Dorsolateral prefrontal cortex (tissue), 120 donors: ENCODE measurements at regions of chr2 and their contacts with region 1.

Region 1: DNA sequence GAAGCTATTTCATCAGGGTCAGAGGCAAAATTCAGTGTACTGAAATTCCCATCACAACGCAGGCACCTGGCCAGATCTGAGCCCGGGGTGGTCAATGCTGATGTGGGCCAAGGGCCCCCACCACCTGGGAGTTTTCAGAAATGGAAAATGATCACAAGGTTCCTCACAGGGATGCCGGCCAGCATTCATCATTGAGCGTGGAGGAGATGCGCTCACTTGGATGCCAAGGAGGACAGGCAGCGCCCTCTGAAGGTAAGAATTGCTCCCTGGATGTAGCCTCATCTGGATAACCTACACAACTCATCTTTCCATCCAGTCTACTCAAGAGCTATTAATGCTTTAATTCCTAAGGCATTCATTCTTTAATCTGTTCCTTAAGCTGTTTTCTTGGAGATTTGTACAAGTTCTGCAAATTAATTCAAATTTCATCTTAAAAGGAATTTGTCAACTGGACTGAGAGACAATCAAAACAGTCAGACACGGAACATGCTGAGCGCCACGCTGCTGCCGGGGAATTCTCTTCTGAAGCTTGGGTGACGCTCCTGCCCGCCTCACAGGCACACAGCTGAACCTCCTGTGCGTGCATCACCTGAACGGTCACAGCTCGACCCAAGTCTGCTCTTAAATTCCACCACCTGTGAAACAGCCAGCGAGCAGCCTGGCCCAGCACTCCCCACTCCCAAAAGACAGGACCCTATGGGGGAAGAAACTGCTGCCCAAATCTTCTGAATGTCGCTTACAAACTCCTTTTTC is 206.7 kb downstream of the HDAC4 start:
- DNase-seq: peak in 9 of 10 donors; percentile 28 to 87 (median 76)
- H3K4me3 ChIP-seq: peak overlapping the region in 44 of 59 donors; percentile 2 to 63 (median 44)
- H3K27ac ChIP-seq: peak overlapping the region; percentile 55 to 98 (median 91)
- H3K27me3 ChIP-seq: no peaks in the 10 kb centered on the region
- CTCF ChIP-seq: peak in 55 of 56 donors; percentile 25 to 78 (median 65)

Region 2: DNA sequence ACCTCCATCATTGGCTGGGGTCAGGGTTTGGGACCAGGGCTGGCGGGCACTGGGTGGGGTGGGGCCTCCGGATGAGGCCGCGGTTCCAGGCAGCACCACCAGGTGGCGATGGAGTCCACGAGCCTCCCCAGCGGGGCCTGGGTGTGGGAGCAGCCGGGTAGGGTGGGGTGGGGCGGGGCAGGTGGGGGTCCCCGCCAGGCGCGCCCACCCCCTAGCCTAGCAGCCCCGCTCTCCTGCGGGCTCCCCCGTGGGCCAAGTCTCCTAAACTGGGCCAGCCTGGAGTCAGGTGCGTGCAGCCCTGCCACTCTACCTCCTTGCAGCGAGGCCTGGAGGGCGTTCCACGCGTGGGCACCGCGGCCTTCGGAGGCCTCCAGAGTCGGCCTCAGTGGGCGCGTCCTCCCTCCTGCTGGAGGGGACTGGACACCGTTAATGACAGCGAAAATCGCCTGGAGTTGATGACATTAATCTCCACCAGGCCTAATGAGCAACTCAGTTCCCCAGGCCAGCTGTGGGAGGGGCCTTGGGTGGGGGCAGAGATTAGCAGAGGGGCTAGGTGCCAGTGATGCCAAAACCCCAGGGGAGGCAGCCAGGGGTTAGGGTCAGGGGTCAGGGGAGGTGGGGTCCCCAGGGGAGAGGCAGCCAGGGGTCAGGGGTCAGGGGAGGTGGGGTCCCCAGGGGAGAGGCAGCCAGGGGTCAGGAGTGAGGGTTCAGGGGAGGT is 158.6 kb before region 1 on chr2:
- intact Hi-C with region 1: loop called (anchors 5 to 10 kb)
- DNase-seq: peak; percentile 47 to 82 (median 64)
- H3K4me3 ChIP-seq: peak overlapping the region in 2 of 59 donors; percentile 18
- H3K27ac ChIP-seq: peak overlapping the region in 3 of 59 donors; percentile 44 to 57 (median 46)
- H3K27me3 ChIP-seq: no peaks in the 10 kb centered on the region
- CTCF ChIP-seq: peak; percentile 61 to 99 (median 93)

Region 3: DNA sequence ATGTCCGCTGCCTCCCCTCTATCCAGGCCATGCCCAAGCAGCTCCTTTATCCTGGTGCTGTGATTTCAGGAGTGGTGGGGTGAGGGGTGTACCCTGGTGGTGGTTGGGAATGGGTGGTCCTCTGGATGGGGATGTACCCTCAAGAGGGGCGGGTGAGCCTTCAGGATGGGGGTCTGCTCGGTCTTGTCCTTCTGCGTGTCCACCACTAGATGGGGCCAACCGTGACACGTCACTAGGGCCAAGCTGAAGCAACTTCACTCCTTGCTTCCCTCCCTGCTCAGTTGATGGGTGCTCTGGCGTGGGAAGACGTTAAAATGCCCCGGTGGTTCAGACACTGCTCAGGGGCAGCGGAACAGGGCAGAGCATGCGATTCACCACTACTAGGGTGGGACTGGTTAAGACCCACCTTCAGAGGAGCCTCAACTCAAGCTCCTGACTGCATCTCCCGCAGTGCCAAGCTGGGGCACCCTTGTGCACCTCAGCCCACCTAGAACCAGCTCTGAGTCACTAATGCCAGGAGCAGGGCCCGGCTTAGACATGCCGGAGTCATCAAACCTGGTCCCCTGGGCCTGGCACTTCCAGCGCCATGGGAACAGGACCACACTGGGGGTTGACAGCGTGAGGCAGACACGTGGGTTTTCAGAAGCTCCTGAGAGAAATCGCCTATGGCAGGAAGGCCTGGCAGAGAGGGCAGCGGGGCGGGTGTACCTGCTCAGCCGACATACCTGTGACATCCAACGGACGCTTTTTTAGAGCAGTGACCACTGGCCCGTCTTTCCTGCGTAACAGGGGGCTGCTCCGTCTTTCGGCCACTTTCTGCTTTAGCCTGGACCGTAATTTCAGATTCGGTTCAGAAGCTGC is 50.0 kb before region 1 on chr2:
- intact Hi-C with region 1: loop called (anchors 5 kb)
- DNase-seq: peak in 2 of 10 donors; percentile 34 to 36
- H3K4me3 ChIP-seq: no peak overlapping the region
- H3K27ac ChIP-seq: peak overlapping the region in 43 of 59 donors; percentile 4 to 75 (median 51)
- H3K27me3 ChIP-seq: no peaks in the 10 kb centered on the region
- CTCF ChIP-seq: peak in 55 of 56 donors; percentile 26 to 82 (median 73)

Region 4: DNA sequence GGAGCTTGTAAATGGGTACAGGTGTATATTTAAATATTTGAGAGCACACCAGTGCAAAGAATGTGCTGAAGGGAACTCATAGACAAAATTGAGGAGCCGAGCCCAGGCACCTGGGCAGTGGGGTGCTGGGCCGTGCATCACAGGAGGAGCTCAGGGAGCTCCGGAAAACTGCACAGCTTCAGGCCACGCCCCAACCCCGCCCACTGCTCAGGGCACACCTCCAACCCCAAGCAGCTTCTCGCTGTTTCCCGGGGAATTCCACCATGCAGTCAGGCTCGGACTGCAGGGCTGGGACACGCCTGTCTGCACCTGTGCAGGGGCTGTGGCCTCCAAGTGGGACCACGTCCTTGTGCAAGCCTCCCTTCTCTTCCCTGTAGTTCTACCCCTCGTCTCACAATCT is 36.3 kb before region 1 on chr2:
- intact Hi-C with region 1: loop called in 1 of 2 experiments (anchors 5 kb)
- DNase-seq: peak in 9 of 10 donors; percentile 11 to 51 (median 29)
- H3K4me3 ChIP-seq: no peak overlapping the region
- H3K27ac ChIP-seq: peak overlapping the region in 16 of 59 donors; percentile 28 to 98 (median 94)
- H3K27me3 ChIP-seq: no peaks in the 10 kb centered on the region
- CTCF ChIP-seq: no peak

Region 5: GRCh38 chr2:239223310-239224198 is 29.5 kb after region 1 on chr2:
- intact Hi-C with region 1: loop called in 1 of 2 experiments (anchors 1 kb)
- DNase-seq: peak in 9 of 10 donors; percentile 71 to 89 (median 82)
- H3K4me3 ChIP-seq: peak overlapping the region in 43 of 59 donors; percentile 1 to 55 (median 24)
- H3K27ac ChIP-seq: peak overlapping the region; percentile 83 to 99 (median 97)
- H3K27me3 ChIP-seq: no peaks in the 10 kb centered on the region
- CTCF ChIP-seq: no peak

Region 6: DNA sequence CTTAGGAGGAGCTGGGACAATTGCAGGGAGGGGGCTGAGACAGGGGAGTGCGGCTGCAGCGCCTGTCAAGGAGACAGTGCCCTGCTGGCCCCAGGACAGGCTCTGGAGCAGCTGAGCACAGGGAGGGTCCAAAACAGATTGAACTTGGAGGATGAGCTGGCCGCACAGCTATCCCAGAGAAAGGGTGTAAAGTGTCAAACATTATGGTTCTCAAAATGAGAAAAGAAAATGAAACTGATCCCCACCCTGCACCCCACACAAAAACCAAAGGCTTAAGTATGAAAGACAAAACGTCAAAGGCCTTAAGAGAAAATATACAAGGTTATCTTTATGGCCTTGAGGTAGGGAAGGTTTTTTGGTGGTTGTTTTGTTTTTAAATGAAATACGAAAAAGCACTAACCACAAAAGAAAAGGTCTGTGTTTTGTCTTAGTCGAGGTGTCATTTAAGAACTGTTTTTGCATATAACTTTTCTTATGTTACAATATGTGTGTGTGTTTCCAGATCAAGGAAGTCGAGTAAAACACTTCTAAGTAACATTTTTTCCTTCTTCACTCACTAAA is 94.9 kb after region 1 on chr2:
- intact Hi-C with region 1: no loop called
- DNase-seq: peak in 8 of 10 donors; percentile 1 to 45 (median 24)
- H3K4me3 ChIP-seq: no peak overlapping the region
- H3K27ac ChIP-seq: peak overlapping the region in 32 of 59 donors; percentile 1 to 98 (median 43)
- H3K27me3 ChIP-seq: no peaks in the 10 kb centered on the region
- CTCF ChIP-seq: no peak